SK-N-SH (cell line): ENCODE measurements at regions of chr19 and their contacts with region 1.

Region 1: GRCh38 chr19:33143897-33144405 is 12.0 kb downstream of the WDR88 start:
- DNase-seq: peak; percentile 88
- H3K4me3 ChIP-seq: peak overlapping the region in 1 of 2 experiments; percentile 16; a peak in 1 of 4 replicates
- H3K27ac ChIP-seq: no peak overlapping the region
- H3K4me1 ChIP-seq: peaks cover 0 to 4% of the 10 kb centered on the region in 2 experiments; a peak in 1 of 4 replicates
- H3K27me3 ChIP-seq: no peaks in the 10 kb centered on the region
- CTCF ChIP-seq: peak; percentile 91
- EP300 ChIP-seq: no peak
- RAD21 ChIP-seq: peak; percentile 90

Region 2: DNA sequence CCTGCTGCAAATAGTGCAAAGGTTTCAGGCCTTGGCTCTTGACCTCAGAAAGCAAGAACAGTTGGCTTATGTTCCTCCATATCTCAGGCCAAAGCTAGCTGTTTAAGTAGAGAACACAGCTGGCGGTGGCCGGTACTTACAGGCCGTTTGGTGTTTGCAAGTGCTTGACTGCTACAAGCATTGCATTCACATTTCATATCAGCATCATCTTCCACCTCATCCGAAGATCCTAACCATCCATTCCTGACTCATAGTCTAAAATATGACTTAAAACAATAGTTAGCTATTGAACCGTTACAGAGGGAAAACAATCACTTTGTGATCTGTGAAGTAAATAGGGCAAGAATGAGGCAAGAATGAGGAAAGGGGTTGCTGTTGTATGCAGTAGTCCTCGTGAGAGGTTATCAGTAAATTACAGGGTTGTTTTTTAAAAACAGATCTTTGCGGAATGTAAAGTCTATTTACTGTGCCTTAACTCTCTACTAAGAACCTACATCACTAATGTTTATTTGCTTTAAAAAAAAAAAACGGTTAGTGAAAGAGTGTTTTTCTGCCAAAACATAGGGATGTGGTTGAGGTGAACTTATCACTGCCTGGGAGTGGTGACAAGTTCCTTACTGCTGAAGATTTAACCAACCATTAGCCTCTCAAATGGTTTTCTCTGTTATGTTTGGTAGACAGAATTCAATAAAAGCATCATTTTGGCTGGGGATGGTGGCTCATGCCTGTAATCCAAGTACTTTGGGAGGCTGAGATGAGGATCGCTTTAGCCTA is 33.6 kb before region 1 on chr19:
- CTCF ChIA-PET with region 1: no interaction called
- POLR2A ChIA-PET with region 1: no interaction called
- DNase-seq: no peak
- H3K4me3 ChIP-seq: no peak overlapping the region
- H3K27ac ChIP-seq: peak overlapping the region in 1 of 2 experiments; percentile 68; a peak in 2 of 4 replicates
- H3K4me1 ChIP-seq: peaks cover 0 to 6% of the 10 kb centered on the region in 2 experiments; a peak in 1 of 4 replicates
- H3K27me3 ChIP-seq: no peaks in the 10 kb centered on the region
- CTCF ChIP-seq: no peak
- EP300 ChIP-seq: peak in 1 of 2 experiments; percentile 65; a peak in 1 of 4 replicates
- RAD21 ChIP-seq: no peak

Region 3: GRCh38 chr19:33156334-33156733 is 12.4 kb after region 1 on chr19:
- CTCF ChIA-PET with region 1: interaction called, 10 read pairs
- POLR2A ChIA-PET with region 1: no interaction called
- DNase-seq: no peak
- H3K4me3 ChIP-seq: no peak overlapping the region
- H3K27ac ChIP-seq: no peak overlapping the region
- H3K4me1 ChIP-seq: no peaks in the 10 kb centered on the region
- H3K27me3 ChIP-seq: no peaks in the 10 kb centered on the region
- CTCF ChIP-seq: no peak
- EP300 ChIP-seq: no peak
- RAD21 ChIP-seq: no peak

Region 4: GRCh38 chr19:33176670-33177416 is 32.9 kb after region 1 on chr19:
- CTCF ChIA-PET with region 1: interaction called, 26 read pairs
- POLR2A ChIA-PET with region 1: interaction called, 10 read pairs
- DNase-seq: peak; percentile 97
- H3K4me3 ChIP-seq: peak overlapping the region; percentile 80 to 81
- H3K27ac ChIP-seq: peak overlapping the region; percentile 83 to 98
- H3K4me1 ChIP-seq: peaks cover 0 to 19% of the 10 kb centered on the region in 2 experiments; a peak in 2 of 4 replicates
- H3K27me3 ChIP-seq: no peaks in the 10 kb centered on the region
- CTCF ChIP-seq: 0 out of 2 replicates have a peak, but pooled peaks have one; percentile 11
- EP300 ChIP-seq: peak in 1 of 2 experiments; percentile 46; a peak in 1 of 4 replicates
- RAD21 ChIP-seq: no peak

Region 5: GRCh38 chr19:33199441-33200265 is 55.7 kb after region 1 on chr19:
- CTCF ChIA-PET with region 1: no interaction called
- POLR2A ChIA-PET with region 1: no interaction called
- DNase-seq: peak; percentile 9
- H3K4me3 ChIP-seq: no peak overlapping the region
- H3K27ac ChIP-seq: no peak overlapping the region
- H3K4me1 ChIP-seq: peaks cover 0 to 8% of the 10 kb centered on the region in 2 experiments; a peak in 1 of 4 replicates
- H3K27me3 ChIP-seq: no peaks in the 10 kb centered on the region
- CTCF ChIP-seq: no peak
- EP300 ChIP-seq: no peak
- RAD21 ChIP-seq: no peak